ENCODE measurements at regions of chr15 and their contacts with region 1.

Region 1: GRCh38 chr15:79184465-79184892 is 93.9 kb upstream of the RASGRF1 start:
- DNase-seq: peak; percentile 25 to 43
- ATAC-seq: no peak
- H3K4me3 ChIP-seq: no peak overlapping the region
- H3K27ac ChIP-seq: no peak overlapping the region
- H3K4me1 ChIP-seq: no peaks in the 10 kb centered on the region
- H3K27me3 ChIP-seq: no peaks in the 10 kb centered on the region
- CTCF ChIP-seq: peak; percentile 83 to 97 (median 85)
- POLR2A ChIP-seq: no peak

Region 2: GRCh38 chr15:78638658-78639314 is 545.7 kb before region 1 on chr15:
- in situ Hi-C with region 1: loop called in 1 of 4 experiments (anchors 25 kb)
- intact Hi-C with region 1: no loop called
- DNase-seq: no peak
- ATAC-seq: peak in 1 of 2 donors; percentile 58
- H3K4me3 ChIP-seq: no peak overlapping the region
- H3K27ac ChIP-seq: no peak overlapping the region
- H3K4me1 ChIP-seq: peaks cover 0 to 8% of the 10 kb centered on the region in 2 donors
- H3K27me3 ChIP-seq: peaks cover 0 to 15% (median 13%) of the 10 kb centered on the region in 3 donors
- CTCF ChIP-seq: peak; percentile 33 to 66 (median 53)
- POLR2A ChIP-seq: no peak

Region 3: GRCh38 chr15:78840661-78841375 is 343.7 kb before region 1 on chr15:
- in situ Hi-C with region 1: loop called in 1 of 4 experiments (anchors 25 kb)
- intact Hi-C with region 1: no loop called
- DNase-seq: no peak
- ATAC-seq: no peak
- H3K4me3 ChIP-seq: no peak overlapping the region
- H3K27ac ChIP-seq: no peak overlapping the region
- H3K4me1 ChIP-seq: no peaks in the 10 kb centered on the region
- H3K27me3 ChIP-seq: no peaks in the 10 kb centered on the region
- CTCF ChIP-seq: no peak
- POLR2A ChIP-seq: no peak

Region 4: DNA sequence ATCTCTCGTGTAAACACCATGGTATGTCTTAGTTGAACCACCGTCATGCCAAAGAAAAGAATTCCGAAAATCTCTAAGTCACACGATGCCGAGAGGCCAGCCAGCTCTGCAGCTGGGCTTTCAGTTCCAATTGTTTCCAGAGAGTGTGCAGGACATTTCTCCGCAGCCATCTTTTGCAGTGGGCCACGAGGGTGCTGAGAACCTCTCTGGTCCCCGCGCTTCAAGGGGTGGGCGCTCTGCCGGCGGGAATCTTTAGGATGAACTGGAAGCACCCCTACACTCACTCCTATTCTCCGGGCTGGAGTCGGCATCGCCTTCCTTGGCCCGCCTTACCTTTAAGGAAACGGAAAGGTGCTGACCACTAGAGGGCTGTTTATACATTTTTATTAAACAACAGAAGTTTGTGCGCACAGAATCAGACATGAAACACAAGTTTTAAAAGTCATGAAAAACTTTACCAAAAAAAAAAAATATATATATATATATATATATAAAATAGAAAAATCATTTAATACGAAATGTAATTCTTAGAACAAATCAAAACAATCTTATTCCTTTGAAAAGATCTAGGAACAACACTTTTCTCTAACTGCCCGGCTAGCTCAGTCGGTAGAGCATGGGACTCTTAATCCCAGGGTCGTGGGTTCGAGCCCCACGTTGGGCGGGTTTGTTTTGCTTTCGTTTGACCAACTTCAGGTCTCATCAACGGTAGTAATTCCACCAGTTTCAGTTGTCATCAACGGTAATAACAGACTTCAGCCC is 324.3 kb before region 1 on chr15:
- in situ Hi-C with region 1: no loop called
- intact Hi-C with region 1: loop called (anchors 1 kb)
- DNase-seq: peak; percentile 23 to 57
- ATAC-seq: peak; percentile 83 to 88
- H3K4me3 ChIP-seq: peak overlapping the region; percentile 43 to 60 (median 56)
- H3K27ac ChIP-seq: peak overlapping the region; percentile 1 to 51 (median 18)
- H3K4me1 ChIP-seq: no peaks in the 10 kb centered on the region
- H3K27me3 ChIP-seq: no peaks in the 10 kb centered on the region
- CTCF ChIP-seq: peak; percentile 25 to 57 (median 40)
- POLR2A ChIP-seq: no peak

Region 5: DNA sequence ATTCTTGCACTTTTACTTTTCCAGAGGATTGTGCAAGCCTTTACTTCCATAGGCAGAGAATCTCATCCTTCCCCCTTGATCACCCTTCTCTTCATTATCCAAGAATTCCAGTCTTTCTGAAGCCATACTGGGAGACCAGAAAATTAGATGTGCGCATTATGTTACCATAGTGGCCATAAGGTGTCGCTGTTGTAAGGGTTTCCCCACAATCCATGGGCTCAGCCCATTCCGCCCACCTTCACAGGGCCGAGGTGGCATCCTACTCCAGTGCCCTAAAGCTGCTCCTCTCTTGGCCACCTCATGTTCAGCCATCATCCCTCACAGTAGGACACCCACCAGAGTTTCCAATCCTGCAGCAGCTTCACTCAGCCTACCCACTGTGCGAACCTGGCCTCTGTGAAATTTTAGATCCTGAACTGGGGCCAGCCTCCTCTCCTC is 274.7 kb before region 1 on chr15:
- in situ Hi-C with region 1: loop called in 1 of 4 experiments (anchors 25 kb)
- intact Hi-C with region 1: loop called (anchors 5 kb)
- DNase-seq: no peak
- ATAC-seq: peak in 1 of 2 donors; percentile 32
- H3K4me3 ChIP-seq: no peak overlapping the region
- H3K27ac ChIP-seq: no peak overlapping the region
- H3K4me1 ChIP-seq: peaks cover 13 to 16% of the 10 kb centered on the region in 2 donors
- H3K27me3 ChIP-seq: no peaks in the 10 kb centered on the region
- CTCF ChIP-seq: peak; percentile 37 to 65 (median 57)
- POLR2A ChIP-seq: no peak

Region 6: GRCh38 chr15:79028411-79028964 is 156.0 kb before region 1 on chr15:
- in situ Hi-C with region 1: loop called (anchors 5 to 10 kb)
- intact Hi-C with region 1: loop called (anchors 1 kb)
- DNase-seq: no peak
- ATAC-seq: no peak
- H3K4me3 ChIP-seq: no peak overlapping the region
- H3K27ac ChIP-seq: no peak overlapping the region
- H3K4me1 ChIP-seq: no peaks in the 10 kb centered on the region
- H3K27me3 ChIP-seq: no peaks in the 10 kb centered on the region
- CTCF ChIP-seq: peak; percentile 55 to 75 (median 69)
- POLR2A ChIP-seq: no peak

Region 7: DNA sequence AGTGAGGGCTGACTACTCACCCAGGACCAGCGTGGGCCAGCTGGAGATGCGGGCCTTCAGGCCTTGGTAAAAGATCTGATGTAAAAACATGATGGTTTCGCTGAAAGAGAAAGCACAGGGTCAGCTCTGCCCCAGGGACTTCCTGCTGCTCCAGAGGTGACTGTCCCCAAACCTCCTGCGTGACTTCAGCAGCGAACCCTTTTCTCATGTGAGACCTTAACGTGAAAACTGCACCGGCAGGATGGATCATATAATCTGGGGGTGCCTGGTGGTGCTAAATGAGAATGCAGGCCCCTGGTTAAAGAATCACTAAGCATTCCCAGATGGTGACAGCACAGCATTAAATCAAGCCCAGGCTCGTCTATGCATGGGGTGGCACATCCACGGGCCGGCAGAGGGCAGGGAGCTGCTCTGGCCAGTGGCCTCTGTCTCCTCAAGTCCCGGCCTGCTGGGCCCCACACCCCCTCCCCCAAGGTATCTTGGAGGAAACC is 149.3 kb before region 1 on chr15:
- in situ Hi-C with region 1: loop called in 1 of 4 experiments (anchors 10 kb)
- intact Hi-C with region 1: no loop called
- DNase-seq: no peak
- ATAC-seq: no peak
- H3K4me3 ChIP-seq: no peak overlapping the region
- H3K27ac ChIP-seq: no peak overlapping the region
- H3K4me1 ChIP-seq: no peaks in the 10 kb centered on the region
- H3K27me3 ChIP-seq: peaks cover 0 to 3% (median 0%) of the 10 kb centered on the region in 3 donors
- CTCF ChIP-seq: no peak
- POLR2A ChIP-seq: no peak

Region 8: GRCh38 chr15:80856809-80857377 is 1672.4 kb after region 1 on chr15:
- in situ Hi-C with region 1: no loop called
- intact Hi-C with region 1: no loop called
- DNase-seq: peak; percentile 47 to 48
- ATAC-seq: peak; percentile 54 to 63
- H3K4me3 ChIP-seq: no peak overlapping the region
- H3K27ac ChIP-seq: no peak overlapping the region
- H3K4me1 ChIP-seq: peaks cover 7% of the 10 kb centered on the region in 2 donors
- H3K27me3 ChIP-seq: no peaks in the 10 kb centered on the region
- CTCF ChIP-seq: no peak
- POLR2A ChIP-seq: no peak

Measured in gastrocnemius medialis (tissue), 4 donors.